ENCODE measurements at regions of chr11 and their contacts with region 1.

Region 1: DNA sequence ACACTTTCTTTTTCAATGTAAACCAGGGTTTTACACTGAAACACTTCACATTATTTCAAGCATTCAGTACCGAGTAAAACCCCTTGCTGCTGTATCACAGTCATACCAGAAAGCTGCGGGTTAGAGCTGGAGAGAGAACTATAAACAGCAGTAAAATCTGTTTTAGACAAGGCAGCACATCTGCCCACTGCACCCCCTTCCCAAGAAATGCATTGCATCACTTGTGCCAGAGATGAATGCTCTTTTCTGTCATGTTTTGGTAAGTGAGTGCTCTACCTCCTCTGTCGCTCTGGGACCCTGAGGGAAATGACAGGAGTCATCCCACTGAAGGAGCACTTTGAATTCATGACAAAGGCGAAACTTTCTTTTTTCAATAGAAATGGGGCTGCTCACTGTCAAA is 107.2 kb downstream of the MAML2 start:
- DNase-seq: no peak
- ATAC-seq: peak; percentile 98
- H3K4me3 ChIP-seq: no peak overlapping the region
- H3K27ac ChIP-seq: peak overlapping the region; percentile 53
- H3K4me1 ChIP-seq: peaks cover 7% of the 10 kb centered on the region
- H3K27me3 ChIP-seq: no peaks in the 10 kb centered on the region
- CTCF ChIP-seq: no peak
- EP300 ChIP-seq: no peak; a peak in 1 of 4 replicates
- POLR2A ChIP-seq: no peak
- RAD21 ChIP-seq: 0 out of 2 replicates have a peak, but pooled peaks have one; percentile 9

Region 2: DNA sequence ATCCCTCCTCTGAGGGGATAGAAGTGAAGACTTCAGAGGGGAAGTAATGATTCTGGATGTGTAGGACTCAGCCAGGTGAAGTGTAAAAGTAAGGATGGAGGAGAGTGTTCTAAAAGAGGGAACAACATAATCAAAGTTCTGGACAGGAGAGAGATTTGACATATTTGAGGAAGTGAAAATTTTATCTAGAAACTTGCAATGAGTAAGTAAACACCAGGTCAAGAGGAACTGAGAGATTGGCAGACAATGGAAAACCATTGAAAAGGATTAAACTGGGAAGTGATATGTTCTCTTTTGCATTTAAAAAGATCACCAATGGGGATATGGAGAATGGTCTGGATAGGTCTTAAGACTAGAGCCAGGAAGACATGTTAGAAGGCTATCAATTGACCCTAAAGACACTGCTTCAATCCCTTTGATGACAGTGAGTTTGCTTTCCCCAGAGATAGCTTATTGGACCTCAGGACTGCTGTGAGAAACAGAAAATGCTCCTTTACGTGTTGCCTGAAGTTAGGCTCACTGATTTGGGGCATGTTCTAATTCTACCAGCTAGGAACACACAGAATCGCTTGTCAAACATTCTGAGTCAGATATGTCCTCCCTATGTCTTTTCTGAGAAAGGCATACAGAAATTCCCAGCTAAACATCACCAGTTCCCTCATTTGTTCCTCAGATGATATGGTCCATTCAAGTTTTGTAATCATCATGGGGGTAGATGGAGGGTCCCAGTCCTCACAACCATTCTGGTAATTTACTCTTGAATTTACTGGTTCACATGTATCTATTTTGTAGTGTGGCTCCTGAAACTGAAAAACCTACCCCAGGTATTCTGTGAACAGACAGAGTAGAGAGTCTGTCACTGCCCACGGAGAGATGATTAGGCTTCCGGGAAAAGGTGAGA is 37.7 kb before region 1 on chr11:
- CTCF ChIA-PET with region 1: interaction called, 3 read pairs
- POLR2A ChIA-PET with region 1: interaction called, 3 read pairs
- RAD21 ChIA-PET with region 1: no interaction called
- SMC1A ChIA-PET with region 1: interaction called, 11 read pairs
- in situ Hi-C with region 1: no loop called
- intact Hi-C with region 1: no loop called
- DNase-seq: no peak
- ATAC-seq: peak; percentile 83
- H3K4me3 ChIP-seq: 0 out of 2 replicates have a peak overlapping the region, but pooled peaks have one; percentile 3
- H3K27ac ChIP-seq: peak overlapping the region; percentile 98
- H3K4me1 ChIP-seq: peaks cover 41% of the 10 kb centered on the region
- H3K27me3 ChIP-seq: no peaks in the 10 kb centered on the region
- CTCF ChIP-seq: no peak
- EP300 ChIP-seq: peak; percentile 82 to 97
- POLR2A ChIP-seq: no peak
- RAD21 ChIP-seq: no peak; the same call in 1 of the 2 replicates

Region 3: GRCh38 chr11:96279896-96280290 is 44.1 kb after region 1 on chr11:
- CTCF ChIA-PET with region 1: no interaction called
- POLR2A ChIA-PET with region 1: no interaction called
- RAD21 ChIA-PET with region 1: no interaction called
- SMC1A ChIA-PET with region 1: no interaction called
- in situ Hi-C with region 1: no loop called
- intact Hi-C with region 1: no loop called
- DNase-seq: no peak
- ATAC-seq: no peak
- H3K4me3 ChIP-seq: no peak overlapping the region
- H3K27ac ChIP-seq: no peak overlapping the region
- H3K4me1 ChIP-seq: peaks cover 39% of the 10 kb centered on the region
- H3K27me3 ChIP-seq: no peaks in the 10 kb centered on the region
- CTCF ChIP-seq: no peak
- EP300 ChIP-seq: no peak
- POLR2A ChIP-seq: no peak
- RAD21 ChIP-seq: no peak